ENCODE measurements at regions of chr9 and their contacts with region 1.

Region 1: GRCh38 chr9:128370826-128371621 is at the start of gene URM1:
- DNase-seq: peak; percentile 98
- H3K4me3 ChIP-seq: peak within 1 kb of the TSS; percentile 86 to 94 (median 92)
- H3K27ac ChIP-seq: peak within 1 kb of the TSS; percentile 74
- H3K4me1 ChIP-seq: peaks cover 15% of the 10 kb centered on the region
- H3K27me3 ChIP-seq: no peaks in the 10 kb centered on the region
- CTCF ChIP-seq: peak in 1 of 2 donors; percentile 22
- total RNA-seq, gene URM1: 24.5 to 53.7 TPM

Region 2: DNA sequence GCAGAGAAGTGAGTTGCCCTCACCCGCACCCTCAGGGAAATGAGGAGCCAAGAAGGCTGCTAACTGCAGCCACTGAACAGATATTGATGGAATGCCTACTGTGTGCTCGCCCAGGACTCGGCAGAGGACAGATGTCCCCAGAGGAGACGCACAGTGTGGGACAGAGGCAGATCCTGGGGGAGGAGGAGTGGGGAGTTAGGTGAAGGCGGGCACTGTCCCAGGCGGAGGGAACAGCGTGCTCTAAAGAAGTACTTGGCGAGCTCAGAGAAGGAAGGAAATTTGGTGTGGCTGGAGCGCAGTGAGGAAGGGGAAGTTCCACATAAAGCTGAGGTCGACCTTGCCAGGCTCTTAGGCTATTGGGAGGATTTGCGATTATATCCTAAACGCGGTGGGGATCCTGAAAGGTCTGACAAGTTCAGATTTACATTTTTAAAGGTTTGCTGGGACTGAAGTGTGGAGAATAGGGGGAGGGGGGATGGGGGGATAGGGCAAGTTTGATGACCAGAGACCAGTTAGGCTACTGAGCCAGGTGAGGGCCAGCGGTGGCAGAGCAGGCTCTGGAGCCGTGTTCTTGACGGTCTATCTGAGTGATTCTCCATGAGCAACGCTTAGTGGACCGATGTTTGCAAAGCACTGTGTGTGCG is 26.1 kb after region 1 on chr9:
- CTCF ChIA-PET with region 1: no interaction called
- dilution Hi-C with region 1: no loop called
- in situ Hi-C with region 1: no loop called
- intact Hi-C with region 1: loop called (anchors 2 kb)
- DNase-seq: no peak
- H3K4me3 ChIP-seq: no peak overlapping the region
- H3K27ac ChIP-seq: no peak overlapping the region
- H3K4me1 ChIP-seq: peaks cover 2% of the 10 kb centered on the region
- H3K27me3 ChIP-seq: no peaks in the 10 kb centered on the region
- CTCF ChIP-seq: no peak

Region 3: GRCh38 chr9:128628471-128629048 is 257.5 kb after region 1 on chr9:
- CTCF ChIA-PET with region 1: no interaction called
- dilution Hi-C with region 1: loop called (anchors 5 kb)
- in situ Hi-C with region 1: no loop called
- intact Hi-C with region 1: no loop called
- DNase-seq: no peak
- H3K4me3 ChIP-seq: no peak overlapping the region
- H3K27ac ChIP-seq: no peak overlapping the region
- H3K4me1 ChIP-seq: no peaks in the 10 kb centered on the region
- H3K27me3 ChIP-seq: no peaks in the 10 kb centered on the region
- CTCF ChIP-seq: no peak